Uterus (tissue), 4 donors: ENCODE measurements at regions of chr2 and their contacts with region 1.

Region 1: GRCh38 chr2:67638146-67638545 is 241.0 kb downstream of the ETAA1 start:
- DNase-seq: no peak
- H3K4me3 ChIP-seq: no peak overlapping the region
- H3K27ac ChIP-seq: no peak overlapping the region
- H3K4me1 ChIP-seq: peaks cover 0 to 8% of the 10 kb centered on the region in 2 donors
- H3K27me3 ChIP-seq: no peaks in the 10 kb centered on the region
- CTCF ChIP-seq: no peak
- POLR2A ChIP-seq: no peak

Region 2: GRCh38 chr2:66962625-66963207 is 675.4 kb before region 1 on chr2:
- intact Hi-C with region 1: loop called (anchors 5 kb)
- DNase-seq: peak; percentile 40 to 59
- H3K4me3 ChIP-seq: no peak overlapping the region
- H3K27ac ChIP-seq: peak overlapping the region; percentile 57
- H3K4me1 ChIP-seq: peaks cover 0 to 5% of the 10 kb centered on the region in 2 donors
- H3K27me3 ChIP-seq: no peaks in the 10 kb centered on the region
- CTCF ChIP-seq: no peak
- POLR2A ChIP-seq: no peak

Region 3: DNA sequence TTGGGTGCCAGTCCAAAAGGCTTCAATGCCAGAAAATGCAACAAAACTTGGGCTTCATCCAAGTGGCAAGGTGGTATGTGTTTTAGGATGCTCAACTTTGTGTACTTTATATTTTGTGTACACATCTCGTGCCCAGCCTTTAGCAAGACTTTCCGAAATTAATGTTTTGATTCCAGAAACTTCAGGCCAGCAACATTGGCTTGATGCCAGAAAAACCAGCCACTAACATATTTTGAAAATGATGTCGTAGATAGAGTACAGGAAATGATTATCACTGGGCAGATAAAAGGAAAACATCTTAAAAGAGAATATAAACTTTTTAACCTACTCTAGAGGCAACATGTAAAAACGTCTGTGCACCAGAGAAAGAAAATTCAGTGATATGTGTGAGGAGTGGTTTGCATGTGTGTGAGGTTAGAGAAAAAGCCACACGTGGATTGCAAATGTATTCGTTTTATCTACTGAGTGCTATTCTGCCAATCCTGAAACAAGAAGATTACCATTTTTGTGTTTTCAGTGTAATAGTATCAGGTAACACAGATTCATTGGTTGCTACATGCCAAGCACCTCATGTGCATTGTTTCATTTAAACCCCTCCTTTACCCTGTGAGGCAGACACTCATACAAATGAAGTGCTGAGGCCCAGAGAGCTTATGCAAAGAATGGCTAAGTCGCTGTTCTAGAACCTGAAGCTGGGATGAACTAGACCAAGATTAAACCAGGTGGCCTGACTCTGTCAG is 159.8 kb after region 1 on chr2:
- intact Hi-C with region 1: no loop called
- DNase-seq: no peak
- H3K4me3 ChIP-seq: no peak overlapping the region
- H3K27ac ChIP-seq: peak overlapping the region; percentile 26 to 57
- H3K4me1 ChIP-seq: peaks cover 5 to 7% of the 10 kb centered on the region in 2 donors
- H3K27me3 ChIP-seq: no peaks in the 10 kb centered on the region
- CTCF ChIP-seq: no peak
- POLR2A ChIP-seq: no peak